HCT116 (cell line): ENCODE measurements at regions of chr5 and their contacts with region 1.

Region 1: GRCh38 chr5:65721720-65722574 is at the starts of genes NLN and SGTB:
- DNase-seq: peak; percentile 37
- ATAC-seq: peak; percentile 93
- H3K4me3 ChIP-seq: peak within 1 kb of the TSS; percentile 83 to 91
- H3K27ac ChIP-seq: peak within 1 kb of the TSS; percentile 75
- H3K4me1 ChIP-seq: peaks cover 5 to 22% of the 10 kb centered on the region in 2 experiments; a peak in 3 of 4 replicates
- H3K27me3 ChIP-seq: no peaks in the 10 kb centered on the region
- CTCF ChIP-seq: no peak
- POLR2A ChIP-seq: no peak
- RAD21 ChIP-seq: no peak
- total RNA-seq, gene NLN: 67.6 TPM
- total RNA-seq, gene SGTB: 12.6 TPM

Region 2: DNA sequence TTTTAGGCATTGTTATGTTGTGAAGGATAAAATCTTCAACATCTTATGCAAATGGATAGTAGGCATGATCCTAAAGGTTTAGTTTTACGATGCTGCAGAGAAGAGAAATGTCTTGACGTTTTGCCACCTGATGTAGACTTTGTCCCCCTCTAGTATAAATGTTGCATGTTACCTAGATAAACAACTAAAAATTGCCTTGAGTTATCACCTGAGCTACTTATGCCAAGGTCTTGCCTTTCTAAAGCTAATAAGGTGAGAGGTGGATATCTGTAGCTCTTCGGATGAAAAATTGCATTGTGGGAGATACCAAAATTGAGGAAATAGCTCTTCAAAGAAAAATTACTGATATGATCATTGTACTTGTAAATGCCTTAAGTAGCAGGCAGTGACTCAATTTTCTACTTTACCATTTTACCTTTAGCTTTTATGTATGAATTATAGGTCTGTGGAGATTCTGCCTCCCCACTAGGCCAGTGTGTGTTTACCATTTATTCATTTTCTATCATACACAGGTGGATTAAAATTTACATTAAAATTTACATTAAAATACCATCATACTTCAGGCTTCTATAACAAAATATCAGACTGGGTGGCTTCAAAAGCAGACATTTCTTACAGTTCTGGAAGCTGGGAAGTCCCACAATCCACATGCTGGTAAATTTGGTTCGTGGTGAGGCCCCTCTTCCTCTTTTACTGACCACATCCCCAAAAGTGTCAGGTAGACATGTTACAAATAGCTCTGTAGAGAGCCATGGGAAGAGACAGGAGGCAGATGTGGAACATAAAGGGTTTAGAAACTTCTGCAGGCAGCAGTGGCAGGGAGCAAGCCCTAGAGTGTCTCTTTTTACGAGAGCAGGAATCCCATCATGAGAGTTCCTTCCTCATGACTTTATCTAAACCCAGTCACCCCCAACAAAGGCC is 103.7 kb after region 1 on chr5:
- CTCF ChIA-PET with region 1: no interaction called
- POLR2A ChIA-PET with region 1: no interaction called
- RAD21 ChIA-PET with region 1: no interaction called
- intact Hi-C with region 1: no loop called
- DNase-seq: no peak
- ATAC-seq: no peak
- H3K4me3 ChIP-seq: no peak overlapping the region
- H3K27ac ChIP-seq: no peak overlapping the region
- H3K4me1 ChIP-seq: peaks cover 19 to 33% of the 10 kb centered on the region in 2 experiments
- H3K27me3 ChIP-seq: no peaks in the 10 kb centered on the region
- CTCF ChIP-seq: no peak
- POLR2A ChIP-seq: no peak
- RAD21 ChIP-seq: no peak

Region 3: GRCh38 chr5:65938256-65938655 is 216.3 kb after region 1 on chr5:
- CTCF ChIA-PET with region 1: no interaction called
- POLR2A ChIA-PET with region 1: no interaction called
- RAD21 ChIA-PET with region 1: no interaction called
- intact Hi-C with region 1: no loop called
- DNase-seq: no peak
- ATAC-seq: no peak
- H3K4me3 ChIP-seq: no peak overlapping the region
- H3K27ac ChIP-seq: no peak overlapping the region
- H3K4me1 ChIP-seq: peaks cover 26 to 30% of the 10 kb centered on the region in 2 experiments
- H3K27me3 ChIP-seq: no peaks in the 10 kb centered on the region
- CTCF ChIP-seq: no peak
- POLR2A ChIP-seq: no peak
- RAD21 ChIP-seq: no peak

Region 4: GRCh38 chr5:66144074-66144833 is 422.3 kb after region 1 on chr5 and contains the start of gene SREK1:
- CTCF ChIA-PET with region 1: no interaction called
- POLR2A ChIA-PET with region 1: no interaction called
- RAD21 ChIA-PET with region 1: no interaction called
- intact Hi-C with region 1: loop called (anchors 2 kb)
- DNase-seq: peak; percentile 83
- ATAC-seq: peak; percentile 88
- H3K4me3 ChIP-seq: peak within 1 kb of the TSS; percentile 74 to 84
- H3K27ac ChIP-seq: peak within 1 kb of the TSS; percentile 89
- H3K4me1 ChIP-seq: peaks cover 7 to 19% of the 10 kb centered on the region in 2 experiments; a peak in 3 of 4 replicates
- H3K27me3 ChIP-seq: no peaks in the 10 kb centered on the region
- CTCF ChIP-seq: no peak
- POLR2A ChIP-seq: peak; percentile 91
- RAD21 ChIP-seq: no peak
- total RNA-seq, gene SREK1: 65.6 TPM

Region 5: DNA sequence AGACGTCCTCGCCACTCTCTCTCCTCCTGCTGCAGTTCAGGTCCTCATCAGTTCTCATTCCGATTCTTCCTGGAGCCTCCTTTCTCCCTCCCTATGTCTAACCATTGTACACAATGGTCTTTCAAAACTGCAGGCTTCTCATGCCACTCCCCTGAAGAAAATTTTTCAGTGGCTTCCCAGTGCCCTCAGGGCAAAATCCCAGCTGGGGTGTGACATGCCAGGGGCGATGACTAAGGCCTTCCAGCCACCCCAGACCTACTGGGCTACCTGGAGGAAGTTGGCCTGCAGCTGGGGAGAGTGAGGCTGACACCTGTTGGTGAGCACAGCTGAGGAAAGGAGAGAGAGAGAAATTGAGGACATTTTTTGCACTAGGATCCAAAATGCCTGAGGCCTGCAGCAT is 487.4 kb after region 1 on chr5:
- CTCF ChIA-PET with region 1: no interaction called
- POLR2A ChIA-PET with region 1: no interaction called
- RAD21 ChIA-PET with region 1: no interaction called
- intact Hi-C with region 1: loop called (anchors 5 kb)
- DNase-seq: peak; percentile 75
- ATAC-seq: peak; percentile 97
- H3K4me3 ChIP-seq: no peak overlapping the region; a peak in 1 of 4 replicates
- H3K27ac ChIP-seq: peak overlapping the region; percentile 52
- H3K4me1 ChIP-seq: peaks cover 17 to 25% of the 10 kb centered on the region in 2 experiments
- H3K27me3 ChIP-seq: no peaks in the 10 kb centered on the region
- CTCF ChIP-seq: peak; percentile 54 to 60 (median 58); a peak in 5 of 6 replicates
- POLR2A ChIP-seq: no peak
- RAD21 ChIP-seq: peak; percentile 87